Colonic mucosa (tissue), 4 donors: ENCODE measurements at regions of chr2 and their contacts with region 1.

Region 1: DNA sequence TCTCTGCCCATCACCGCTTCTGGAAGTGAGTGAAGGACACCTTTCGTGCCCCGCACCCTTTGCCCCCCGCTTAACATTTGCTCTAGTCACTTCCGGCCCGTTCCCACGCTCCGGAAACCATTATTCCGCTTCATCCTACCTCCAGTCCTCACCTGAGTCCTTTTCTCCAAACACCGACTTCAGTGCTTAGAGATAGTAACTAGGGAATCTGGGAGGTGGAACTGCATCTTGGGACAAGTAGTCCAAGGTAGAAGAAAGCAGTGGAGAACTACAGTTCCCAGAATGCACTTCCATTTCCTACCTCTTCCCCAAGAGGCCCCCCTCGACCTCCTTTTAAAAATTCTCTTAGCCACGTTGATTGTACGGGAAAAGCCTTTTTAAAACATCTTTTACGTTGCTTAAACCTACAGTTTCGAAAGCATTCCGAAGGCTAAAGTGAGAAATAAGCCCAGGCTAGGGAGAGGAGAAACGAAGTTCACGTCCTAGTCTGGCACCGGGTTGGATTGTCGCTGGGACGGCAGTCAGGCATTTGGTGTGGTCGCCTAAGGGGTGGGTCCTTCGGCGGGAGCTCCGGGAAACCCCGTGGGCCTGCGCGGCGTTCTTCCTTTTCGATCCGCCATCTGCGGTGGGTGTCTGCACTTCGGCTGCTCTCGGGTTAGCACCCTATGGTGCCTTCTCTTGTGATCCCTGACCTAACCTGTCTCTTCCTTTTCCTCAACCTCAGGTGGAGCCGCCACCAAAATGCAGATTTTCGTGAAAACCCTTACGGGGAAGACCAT is at the starts of genes CLHC1 and RPS27A:
- DNase-seq: peak; percentile 96
- H3K4me3 ChIP-seq: peak within 1 kb of the TSS; percentile 83
- H3K27ac ChIP-seq: peak within 1 kb of the TSS; percentile 88
- H3K4me1 ChIP-seq: peaks cover 6% of the 10 kb centered on the region
- H3K27me3 ChIP-seq: no peaks in the 10 kb centered on the region
- CTCF ChIP-seq: no peak
- total RNA-seq, gene CLHC1: 8.1 to 8.9 TPM
- total RNA-seq, gene RPS27A: 756 to 773 TPM

Region 2: GRCh38 chr2:55268907-55269644 is 36.8 kb after region 1 on chr2 and contains the start of gene MTIF2:
- intact Hi-C with region 1: loop called (anchors 2 kb)
- DNase-seq: peak; percentile 97
- H3K4me3 ChIP-seq: peak within 1 kb of the TSS; percentile 61
- H3K27ac ChIP-seq: peak within 1 kb of the TSS; percentile 85
- H3K4me1 ChIP-seq: peaks cover 5% of the 10 kb centered on the region
- H3K27me3 ChIP-seq: no peaks in the 10 kb centered on the region
- CTCF ChIP-seq: no peak
- total RNA-seq, gene MTIF2: 39.1 to 49.9 TPM

Region 3: GRCh38 chr2:55338268-55338667 is 106.0 kb after region 1 on chr2:
- intact Hi-C with region 1: no loop called
- DNase-seq: no peak
- H3K4me3 ChIP-seq: no peak overlapping the region
- H3K27ac ChIP-seq: no peak overlapping the region
- H3K4me1 ChIP-seq: no peaks in the 10 kb centered on the region
- H3K27me3 ChIP-seq: no peaks in the 10 kb centered on the region
- CTCF ChIP-seq: no peak

Region 4: GRCh38 chr2:55419679-55420438 is 187.6 kb after region 1 on chr2 and contains the start of gene CCDC88A:
- intact Hi-C with region 1: loop called (anchors 10 kb)
- DNase-seq: peak; percentile 92
- H3K4me3 ChIP-seq: peak within 1 kb of the TSS; percentile 58
- H3K27ac ChIP-seq: peak within 1 kb of the TSS; percentile 72
- H3K4me1 ChIP-seq: no peaks in the 10 kb centered on the region
- H3K27me3 ChIP-seq: no peaks in the 10 kb centered on the region
- CTCF ChIP-seq: no peak
- total RNA-seq, gene CCDC88A: 4.2 to 11.4 TPM

Region 5: GRCh38 chr2:55590810-55591440 is 358.7 kb after region 1 on chr2:
- intact Hi-C with region 1: no loop called
- DNase-seq: no peak
- H3K4me3 ChIP-seq: no peak overlapping the region
- H3K27ac ChIP-seq: no peak overlapping the region
- H3K4me1 ChIP-seq: no peaks in the 10 kb centered on the region
- H3K27me3 ChIP-seq: no peaks in the 10 kb centered on the region
- CTCF ChIP-seq: no peak